Sigmoid colon (tissue), 7 donors: ENCODE measurements at regions of chr2 and their contacts with region 1.

Region 1: GRCh38 chr2:65264821-65265670 is 37.4 kb downstream of the ACTR2 start:
- DNase-seq: no peak
- H3K4me3 ChIP-seq: no peak overlapping the region
- H3K27ac ChIP-seq: no peak overlapping the region
- H3K4me1 ChIP-seq: peaks cover 0 to 3% (median 0%) of the 10 kb centered on the region in 4 donors
- H3K27me3 ChIP-seq: no peaks in the 10 kb centered on the region
- CTCF ChIP-seq: peak; percentile 39 to 76 (median 64)
- EP300 ChIP-seq: no peak
- POLR2A ChIP-seq: no peak

Region 2: GRCh38 chr2:65045651-65046050 is 219.4 kb before region 1 on chr2:
- intact Hi-C with region 1: no loop called
- DNase-seq: no peak
- H3K4me3 ChIP-seq: no peak overlapping the region
- H3K27ac ChIP-seq: no peak overlapping the region
- H3K4me1 ChIP-seq: no peaks in the 10 kb centered on the region
- H3K27me3 ChIP-seq: no peaks in the 10 kb centered on the region
- CTCF ChIP-seq: no peak
- EP300 ChIP-seq: no peak
- POLR2A ChIP-seq: no peak

Region 3: DNA sequence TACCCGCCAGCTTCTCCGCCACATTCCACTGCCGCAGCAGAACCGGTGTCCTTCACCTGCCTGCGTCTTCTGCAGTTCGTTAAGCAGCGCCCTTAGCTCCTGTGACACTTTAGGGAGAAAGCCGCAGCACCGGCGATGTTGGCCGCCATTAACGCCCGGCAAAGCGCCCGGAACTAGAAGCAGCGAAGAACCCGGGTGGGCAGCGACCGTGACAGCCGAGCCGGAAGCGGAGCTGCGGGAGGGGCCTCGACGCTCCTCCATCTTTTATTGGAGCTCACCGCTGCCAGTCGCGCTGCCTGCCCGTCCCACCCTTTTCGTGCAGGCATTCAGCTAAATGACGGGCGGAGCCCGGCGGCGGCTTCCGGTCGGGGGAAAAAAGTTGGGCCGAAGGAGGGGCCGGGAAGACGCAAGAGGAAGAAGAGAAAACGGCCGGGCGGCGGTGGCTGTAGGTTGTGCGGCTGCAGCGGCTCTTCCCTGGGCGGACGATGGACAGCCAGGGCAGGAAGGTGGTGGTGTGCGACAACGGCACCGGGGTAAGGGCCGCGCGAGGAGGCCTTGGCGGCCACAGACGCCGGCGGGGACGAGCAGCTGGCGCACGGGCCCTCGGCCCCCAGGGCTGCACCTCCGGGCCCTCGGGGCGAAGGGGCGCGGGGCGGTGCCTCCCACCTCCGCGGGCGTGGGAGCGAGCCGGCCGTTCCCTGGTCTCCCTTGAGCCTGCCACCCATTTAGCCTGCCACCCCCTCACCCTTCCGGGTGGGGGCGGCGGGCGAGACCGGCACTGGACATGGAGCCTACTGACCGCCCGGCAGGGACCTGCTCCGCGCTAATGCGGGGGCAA is 37.4 kb before region 1 on chr2 and contains the start of gene ACTR2:
- intact Hi-C with region 1: no loop called
- DNase-seq: peak; percentile 98
- H3K4me3 ChIP-seq: peak within 1 kb of the TSS; percentile 92 to 96 (median 93)
- H3K27ac ChIP-seq: peak within 1 kb of the TSS; percentile 95 to 99 (median 97)
- H3K4me1 ChIP-seq: peaks cover 0 to 55% (median 44%) of the 10 kb centered on the region in 4 donors
- H3K27me3 ChIP-seq: no peaks in the 10 kb centered on the region
- CTCF ChIP-seq: no peak
- EP300 ChIP-seq: no peak
- POLR2A ChIP-seq: peak; percentile 66 to 82
- total RNA-seq, gene ACTR2: 70.9 to 98.1 (median 88.1) TPM

Region 4: GRCh38 chr2:65554765-65555591 is 289.9 kb after region 1 on chr2:
- intact Hi-C with region 1: loop called (anchors 1 kb)
- DNase-seq: no peak
- H3K4me3 ChIP-seq: no peak overlapping the region
- H3K27ac ChIP-seq: no peak overlapping the region
- H3K4me1 ChIP-seq: peaks cover 0 to 8% (median 2%) of the 10 kb centered on the region in 4 donors
- H3K27me3 ChIP-seq: no peaks in the 10 kb centered on the region
- CTCF ChIP-seq: no peak
- EP300 ChIP-seq: no peak
- POLR2A ChIP-seq: no peak

Region 5: GRCh38 chr2:65574993-65575392 is 309.9 kb after region 1 on chr2:
- intact Hi-C with region 1: loop called (anchors 5 kb)
- DNase-seq: no peak
- H3K4me3 ChIP-seq: no peak overlapping the region
- H3K27ac ChIP-seq: no peak overlapping the region
- H3K4me1 ChIP-seq: peaks cover 0 to 9% (median 0%) of the 10 kb centered on the region in 4 donors
- H3K27me3 ChIP-seq: no peaks in the 10 kb centered on the region
- CTCF ChIP-seq: no peak
- EP300 ChIP-seq: no peak
- POLR2A ChIP-seq: no peak

Region 6: DNA sequence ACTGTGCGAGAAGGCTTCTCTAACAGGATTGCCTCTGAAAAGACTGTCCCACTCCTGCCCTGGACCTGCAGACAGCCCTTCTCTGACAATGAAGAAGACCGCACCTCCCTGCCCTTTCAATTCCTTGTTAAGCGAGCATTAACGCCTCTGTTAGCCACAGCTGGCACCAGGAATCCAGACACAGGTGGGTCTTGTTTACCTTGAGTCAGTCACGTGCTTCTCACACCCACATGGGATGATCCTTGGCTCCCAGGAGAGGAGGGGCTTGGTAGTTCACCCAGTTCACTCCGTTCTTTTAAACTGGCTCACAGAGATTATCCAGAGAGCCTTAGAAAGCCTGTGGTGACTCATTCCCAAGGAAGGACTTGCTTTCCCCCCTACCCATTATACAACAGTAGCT is 759.4 kb after region 1 on chr2:
- intact Hi-C with region 1: no loop called
- DNase-seq: no peak
- H3K4me3 ChIP-seq: no peak overlapping the region
- H3K27ac ChIP-seq: no peak overlapping the region
- H3K4me1 ChIP-seq: no peaks in the 10 kb centered on the region
- H3K27me3 ChIP-seq: no peaks in the 10 kb centered on the region
- CTCF ChIP-seq: no peak
- EP300 ChIP-seq: no peak
- POLR2A ChIP-seq: no peak